ENCODE measurements at regions of chr11 and their contacts with region 1.

Region 1: GRCh38 chr11:19903620-19904069 is 191.0 kb downstream of the NAV2 start:
- DNase-seq: peak; percentile 58
- H3K4me3 ChIP-seq: no peak overlapping the region
- H3K27ac ChIP-seq: no peak overlapping the region
- H3K4me1 ChIP-seq: peaks cover 3% of the 10 kb centered on the region
- H3K27me3 ChIP-seq: no peaks in the 10 kb centered on the region
- CTCF ChIP-seq: peak; percentile 82

Region 2: DNA sequence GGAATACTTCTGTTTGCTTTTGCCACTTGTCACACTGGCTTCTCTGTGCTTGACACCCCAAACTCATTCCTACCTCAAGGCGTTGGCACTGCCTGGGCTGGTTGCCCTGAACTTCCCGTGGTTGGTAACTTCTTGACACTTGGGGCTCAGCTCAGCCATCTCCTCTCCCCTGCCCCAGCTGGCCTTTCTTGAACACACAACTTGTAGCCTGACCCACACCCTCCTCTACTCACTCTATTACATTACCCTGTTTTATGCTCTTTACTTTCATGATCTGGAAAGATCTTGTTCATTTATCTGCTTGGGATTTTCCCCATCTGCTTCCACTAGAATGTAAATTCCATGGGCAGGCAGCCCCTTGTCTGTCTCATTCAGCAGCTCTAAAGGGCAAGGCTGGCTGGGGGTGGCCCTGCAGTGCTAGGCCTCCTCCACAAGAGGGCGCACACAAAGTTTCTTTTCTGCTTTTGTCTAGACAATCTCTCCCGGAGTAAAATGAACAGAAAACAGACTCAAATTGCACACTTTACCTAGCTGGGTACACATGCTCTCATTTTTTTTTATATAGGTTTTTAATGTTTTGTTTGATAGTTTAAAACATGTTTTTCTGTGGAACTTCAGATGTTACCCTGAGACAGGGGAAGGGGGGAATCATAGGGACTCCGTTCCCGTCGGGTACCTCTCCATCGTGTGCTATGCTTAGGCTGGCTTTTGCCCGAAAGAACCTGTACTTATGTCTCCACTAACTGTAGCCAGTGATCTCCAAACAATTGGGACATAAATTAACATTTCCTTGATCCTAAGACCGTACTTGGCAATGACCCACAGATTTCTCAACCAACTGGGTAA is 826.7 kb before region 1 on chr11:
- CTCF ChIA-PET with region 1: no interaction called
- dilution Hi-C with region 1: no loop called
- in situ Hi-C with region 1: no loop called
- intact Hi-C with region 1: loop called (anchors 5 kb)
- DNase-seq: peak; percentile 34
- H3K4me3 ChIP-seq: no peak overlapping the region
- H3K27ac ChIP-seq: no peak overlapping the region
- H3K4me1 ChIP-seq: peaks cover 20% of the 10 kb centered on the region
- H3K27me3 ChIP-seq: no peaks in the 10 kb centered on the region
- CTCF ChIP-seq: peak; percentile 95 to 98

Region 3: DNA sequence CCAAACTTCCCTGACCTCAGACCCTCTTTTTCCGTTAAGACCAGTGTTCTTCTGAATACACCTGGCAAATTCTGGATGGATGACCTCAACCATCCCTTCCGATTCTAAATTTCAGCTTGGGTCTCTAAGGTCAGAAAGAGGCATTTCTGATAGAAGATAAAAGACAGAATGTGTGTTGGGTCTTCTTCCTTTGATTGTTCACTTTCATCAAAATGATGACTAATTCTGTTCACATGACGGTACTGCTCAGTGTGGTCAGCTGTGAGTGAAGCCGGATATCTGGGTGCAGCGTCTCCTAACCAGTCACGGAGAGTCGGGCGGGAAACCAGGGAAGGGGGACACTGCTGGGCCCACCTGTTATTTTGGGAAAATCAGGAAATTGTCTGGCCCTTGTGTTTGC is 342.6 kb before region 1 on chr11:
- CTCF ChIA-PET with region 1: interaction called, 7 read pairs
- dilution Hi-C with region 1: loop called (anchors 25 kb)
- in situ Hi-C with region 1: loop called (anchors 5 kb)
- intact Hi-C with region 1: loop called (anchors 1 kb)
- DNase-seq: no peak
- H3K4me3 ChIP-seq: no peak overlapping the region
- H3K27ac ChIP-seq: no peak overlapping the region
- H3K4me1 ChIP-seq: peaks cover 5% of the 10 kb centered on the region
- H3K27me3 ChIP-seq: no peaks in the 10 kb centered on the region
- CTCF ChIP-seq: no peak

Region 4: GRCh38 chr11:19660076-19660475 is 243.6 kb before region 1 on chr11:
- CTCF ChIA-PET with region 1: no interaction called
- dilution Hi-C with region 1: no loop called
- in situ Hi-C with region 1: no loop called
- intact Hi-C with region 1: loop called (anchors 2 kb)
- DNase-seq: peak; percentile 98
- H3K4me3 ChIP-seq: no peak overlapping the region
- H3K27ac ChIP-seq: peak overlapping the region; percentile 69
- H3K4me1 ChIP-seq: peaks cover 39% of the 10 kb centered on the region
- H3K27me3 ChIP-seq: no peaks in the 10 kb centered on the region
- CTCF ChIP-seq: no peak

Region 5: GRCh38 chr11:19756675-19757475 is 146.8 kb before region 1 on chr11:
- CTCF ChIA-PET with region 1: no interaction called
- dilution Hi-C with region 1: no loop called
- in situ Hi-C with region 1: no loop called
- intact Hi-C with region 1: no loop called
- DNase-seq: no peak
- H3K4me3 ChIP-seq: no peak overlapping the region
- H3K27ac ChIP-seq: no peak overlapping the region
- H3K4me1 ChIP-seq: no peaks in the 10 kb centered on the region
- H3K27me3 ChIP-seq: no peaks in the 10 kb centered on the region
- CTCF ChIP-seq: no peak

Region 6: GRCh38 chr11:19814421-19814820 is 89.2 kb before region 1 on chr11:
- CTCF ChIA-PET with region 1: interaction called, 6 read pairs
- dilution Hi-C with region 1: no loop called
- in situ Hi-C with region 1: no loop called
- intact Hi-C with region 1: loop called (anchors 2 kb)
- DNase-seq: no peak
- H3K4me3 ChIP-seq: no peak overlapping the region
- H3K27ac ChIP-seq: no peak overlapping the region
- H3K4me1 ChIP-seq: peaks cover 11% of the 10 kb centered on the region
- H3K27me3 ChIP-seq: no peaks in the 10 kb centered on the region
- CTCF ChIP-seq: peak; percentile 17 to 18

Region 7: GRCh38 chr11:19846654-19847305 is 56.9 kb before region 1 on chr11:
- CTCF ChIA-PET with region 1: no interaction called
- dilution Hi-C with region 1: no loop called
- in situ Hi-C with region 1: no loop called
- intact Hi-C with region 1: no loop called
- DNase-seq: no peak
- H3K4me3 ChIP-seq: no peak overlapping the region
- H3K27ac ChIP-seq: no peak overlapping the region
- H3K4me1 ChIP-seq: peaks cover 18% of the 10 kb centered on the region
- H3K27me3 ChIP-seq: no peaks in the 10 kb centered on the region
- CTCF ChIP-seq: no peak

Region 8: GRCh38 chr11:20089796-20090653 is 186.4 kb after region 1 on chr11:
- CTCF ChIA-PET with region 1: no interaction called
- dilution Hi-C with region 1: no loop called
- in situ Hi-C with region 1: no loop called
- intact Hi-C with region 1: no loop called
- DNase-seq: no peak
- H3K4me3 ChIP-seq: no peak overlapping the region
- H3K27ac ChIP-seq: no peak overlapping the region
- H3K4me1 ChIP-seq: no peaks in the 10 kb centered on the region
- H3K27me3 ChIP-seq: no peaks in the 10 kb centered on the region
- CTCF ChIP-seq: no peak

Region 9: GRCh38 chr11:20337526-20338154 is 434.0 kb after region 1 on chr11:
- CTCF ChIA-PET with region 1: no interaction called
- dilution Hi-C with region 1: no loop called
- in situ Hi-C with region 1: loop called in 1 of 2 experiments (anchors 25 kb)
- intact Hi-C with region 1: loop called (anchors 2 kb)
- DNase-seq: peak; percentile 8
- H3K4me3 ChIP-seq: no peak overlapping the region
- H3K27ac ChIP-seq: no peak overlapping the region
- H3K4me1 ChIP-seq: no peaks in the 10 kb centered on the region
- H3K27me3 ChIP-seq: peaks cover 14% of the 10 kb centered on the region
- CTCF ChIP-seq: peak; percentile 35 to 45